Caco-2 (cell line): ENCODE measurements at regions of chr1 and their contacts with region 1.

Region 1: DNA sequence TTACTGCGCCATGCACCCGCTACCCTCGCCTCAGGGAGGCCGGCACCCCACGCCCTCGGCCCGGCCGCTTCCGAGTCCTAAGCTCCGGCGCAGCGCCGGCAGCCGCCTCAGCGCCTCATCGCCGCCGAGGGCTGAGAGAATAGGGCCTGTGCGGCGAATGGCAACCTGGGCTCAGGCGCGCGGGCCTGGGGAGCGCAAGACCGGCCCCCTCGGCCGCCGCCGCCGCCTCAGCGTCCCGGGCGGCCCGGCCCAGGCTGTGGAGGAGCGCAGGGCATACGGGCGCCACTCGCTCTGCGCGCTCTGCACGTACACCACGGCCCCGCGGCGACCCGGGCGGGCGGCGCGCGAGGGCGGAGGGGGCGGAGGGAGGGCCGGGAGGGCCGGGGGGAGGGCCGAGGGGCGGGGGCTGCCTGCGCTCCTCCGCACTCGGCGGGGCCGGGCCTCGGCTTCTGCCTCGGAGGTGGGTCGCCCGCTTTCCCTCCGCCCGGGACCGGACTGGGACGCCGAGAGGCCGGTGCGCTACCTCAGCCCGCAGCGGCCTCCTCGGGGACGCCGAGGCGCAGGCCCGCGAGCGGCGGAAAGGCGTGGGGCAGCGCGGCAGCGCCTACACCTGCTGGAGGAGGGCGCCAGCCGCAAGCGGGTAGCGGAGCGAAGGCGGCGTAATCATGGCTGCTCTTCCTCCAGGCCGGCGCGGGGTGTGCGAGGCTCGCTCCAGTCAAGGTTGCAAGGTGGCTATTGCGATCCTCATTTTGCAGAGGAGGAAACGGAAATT is at the start of gene EGLN1:
- DNase-seq: peak; percentile 89 to 94
- H3K4me3 ChIP-seq: peak within 1 kb of the TSS; percentile 51
- H3K4me3 Mint-ChIP-seq: peak within 1 kb of the TSS; percentile 78
- H3K27ac Mint-ChIP-seq: peak within 1 kb of the TSS; percentile 93
- H3K4me1 ChIP-seq: peaks cover 26% of the 10 kb centered on the region
- H3K4me1 Mint-ChIP-seq: peaks cover 19% of the 10 kb centered on the region
- H3K27me3 ChIP-seq: no peaks in the 10 kb centered on the region
- H3K27me3 Mint-ChIP-seq: no peaks in the 10 kb centered on the region
- CTCF ChIP-seq: peak; percentile 28 to 55
- total RNA-seq, gene EGLN1: 26.7 and 31.1 TPM in 2 replicates

Region 2: DNA sequence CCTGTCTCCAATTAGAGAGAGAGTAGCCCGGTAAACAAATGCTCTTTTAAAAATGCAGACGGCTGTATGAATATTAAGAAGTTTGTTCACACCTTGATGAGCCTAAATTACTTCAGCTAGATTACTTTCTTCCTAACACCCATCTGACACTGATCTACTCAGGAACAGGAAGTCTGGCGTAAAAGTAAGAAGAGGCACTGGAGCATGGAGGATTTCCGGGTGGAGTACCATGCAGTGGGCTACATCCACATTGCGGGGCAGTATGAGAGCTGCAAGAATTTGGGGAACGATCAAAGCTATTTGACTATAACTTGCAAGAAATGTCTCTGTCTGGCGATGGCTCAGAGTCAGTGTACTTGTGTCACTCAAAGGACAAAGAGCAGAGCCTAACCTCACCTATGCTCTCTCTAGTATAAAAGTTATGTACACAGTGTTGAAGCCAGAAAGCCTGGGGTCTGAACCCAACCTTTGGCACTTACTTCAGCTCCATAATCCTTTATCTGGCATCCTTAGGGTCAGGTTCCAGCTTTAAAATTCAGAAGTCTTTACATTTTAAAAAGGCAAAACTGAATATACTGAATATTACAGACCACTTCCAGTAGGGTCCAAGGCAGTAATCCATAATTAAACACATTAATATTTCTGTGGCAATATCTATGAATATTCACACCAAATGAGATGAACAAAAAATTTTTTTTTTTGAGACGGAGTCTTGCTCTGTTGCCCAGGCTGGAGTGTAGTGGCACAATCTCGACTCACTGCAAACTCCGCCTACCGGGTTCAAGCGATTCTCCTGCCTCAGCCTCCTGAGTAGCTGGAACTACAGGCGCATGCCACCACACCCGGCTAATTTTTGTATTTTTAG is 189.1 kb before region 1 on chr1:
- CTCF ChIA-PET with region 1: no interaction called
- POLR2A ChIA-PET with region 1: no interaction called
- intact Hi-C with region 1: loop called (anchors 5 kb)
- DNase-seq: peak in 1 of 2 experiments; percentile 56
- H3K4me3 ChIP-seq: no peak overlapping the region
- H3K4me3 Mint-ChIP-seq: peak overlapping the region; percentile 71
- H3K27ac Mint-ChIP-seq: peak overlapping the region; percentile 96
- H3K4me1 ChIP-seq: peaks cover 49% of the 10 kb centered on the region
- H3K4me1 Mint-ChIP-seq: peaks cover 40% of the 10 kb centered on the region
- H3K27me3 ChIP-seq: no peaks in the 10 kb centered on the region
- H3K27me3 Mint-ChIP-seq: no peaks in the 10 kb centered on the region
- CTCF ChIP-seq: no peak

Region 3: GRCh38 chr1:231357831-231358354 is 64.3 kb before region 1 on chr1:
- CTCF ChIA-PET with region 1: interaction called, 6 read pairs
- POLR2A ChIA-PET with region 1: interaction called, 6 read pairs
- intact Hi-C with region 1: loop called (anchors 5 kb)
- DNase-seq: peak in 1 of 2 experiments; percentile 57
- H3K4me3 ChIP-seq: no peak overlapping the region
- H3K4me3 Mint-ChIP-seq: no peak overlapping the region
- H3K27ac Mint-ChIP-seq: no peak overlapping the region
- H3K4me1 ChIP-seq: no peaks in the 10 kb centered on the region
- H3K4me1 Mint-ChIP-seq: no peaks in the 10 kb centered on the region
- H3K27me3 ChIP-seq: no peaks in the 10 kb centered on the region
- H3K27me3 Mint-ChIP-seq: no peaks in the 10 kb centered on the region
- CTCF ChIP-seq: peak; percentile 64 to 76

Region 4: DNA sequence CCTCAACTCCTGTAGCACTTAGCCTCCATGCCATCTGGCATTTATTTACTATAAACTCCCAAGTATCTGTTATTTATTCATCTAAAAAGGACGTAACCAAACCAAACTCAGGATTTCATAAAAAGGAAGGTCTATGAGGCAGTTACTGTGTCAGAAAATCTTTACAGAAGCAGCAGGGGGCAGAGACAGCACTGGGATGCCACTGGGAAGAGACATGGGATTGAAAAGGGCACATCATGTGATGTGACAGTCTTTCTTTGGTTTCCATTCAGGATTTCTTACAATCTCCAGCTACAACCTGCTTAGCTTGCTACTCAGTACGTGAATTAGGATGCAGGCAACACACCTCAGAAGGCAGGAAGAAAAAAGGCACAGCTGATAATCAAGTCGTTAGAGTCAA is 52.9 kb before region 1 on chr1:
- CTCF ChIA-PET with region 1: no interaction called
- POLR2A ChIA-PET with region 1: no interaction called
- intact Hi-C with region 1: loop called (anchors 1 kb)
- DNase-seq: peak in 1 of 2 experiments; percentile 23
- H3K4me3 ChIP-seq: no peak overlapping the region
- H3K4me3 Mint-ChIP-seq: no peak overlapping the region
- H3K27ac Mint-ChIP-seq: no peak overlapping the region
- H3K4me1 ChIP-seq: no peaks in the 10 kb centered on the region
- H3K4me1 Mint-ChIP-seq: no peaks in the 10 kb centered on the region
- H3K27me3 ChIP-seq: no peaks in the 10 kb centered on the region
- H3K27me3 Mint-ChIP-seq: no peaks in the 10 kb centered on the region
- CTCF ChIP-seq: peak; percentile 17 to 26

Region 5: DNA sequence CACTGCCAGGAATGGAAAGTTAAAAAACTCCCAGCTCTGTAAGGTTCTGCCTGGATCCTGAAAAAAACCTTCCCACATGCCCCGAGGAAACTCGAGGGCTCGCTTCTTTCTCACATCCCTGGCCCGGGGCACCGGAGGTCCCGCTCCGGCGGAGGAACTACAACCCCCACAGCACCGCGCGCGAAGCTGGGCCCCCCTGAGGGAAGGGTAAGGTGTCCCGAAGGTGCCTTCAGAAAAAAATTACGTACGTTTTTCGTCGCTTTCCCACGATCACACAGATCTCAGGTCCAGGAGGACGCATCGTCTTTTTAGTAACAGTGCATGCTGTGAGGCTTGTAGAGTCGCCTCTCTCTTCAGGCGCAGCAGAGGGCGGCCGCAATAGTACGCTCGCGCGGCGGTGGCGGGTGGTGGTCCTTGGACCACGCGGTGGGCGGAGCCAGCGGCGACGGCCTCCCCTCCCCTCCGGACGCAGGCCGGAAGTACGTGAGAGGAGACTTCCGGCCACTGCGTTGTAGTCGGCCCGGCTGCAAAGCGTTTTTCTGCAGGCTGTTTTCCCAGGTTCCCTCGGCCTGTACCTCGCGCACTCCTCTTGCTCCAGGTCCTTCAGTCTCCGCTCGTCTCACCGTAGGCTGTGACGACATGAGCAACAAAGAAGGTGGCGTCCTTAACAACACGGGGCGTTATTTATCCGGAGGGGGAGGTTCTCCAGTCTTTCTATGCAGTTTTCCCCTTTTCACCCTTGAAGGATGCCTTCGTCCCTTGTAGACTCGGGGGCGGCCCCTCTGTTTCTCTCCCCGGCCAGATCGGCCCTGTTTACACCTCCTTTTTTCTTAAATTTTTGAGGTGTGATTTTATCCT is 106.2 kb after region 1 on chr1 and contains the start of gene TSNAX:
- CTCF ChIA-PET with region 1: no interaction called
- POLR2A ChIA-PET with region 1: no interaction called
- intact Hi-C with region 1: loop called (anchors 1 kb)
- DNase-seq: peak; percentile 93 to 95
- H3K4me3 ChIP-seq: peak within 1 kb of the TSS; percentile 88
- H3K4me3 Mint-ChIP-seq: peak within 1 kb of the TSS; percentile 94
- H3K27ac Mint-ChIP-seq: peak within 1 kb of the TSS; percentile 98
- H3K4me1 ChIP-seq: 0 out of 2 replicates have a peak, but pooled peaks cover 5% of the 10 kb centered on the region
- H3K4me1 Mint-ChIP-seq: peaks cover 7% of the 10 kb centered on the region
- H3K27me3 ChIP-seq: no peaks in the 10 kb centered on the region
- H3K27me3 Mint-ChIP-seq: no peaks in the 10 kb centered on the region
- CTCF ChIP-seq: no peak
- total RNA-seq, gene TSNAX: 37.0 and 39.0 TPM in 2 replicates

Region 6: DNA sequence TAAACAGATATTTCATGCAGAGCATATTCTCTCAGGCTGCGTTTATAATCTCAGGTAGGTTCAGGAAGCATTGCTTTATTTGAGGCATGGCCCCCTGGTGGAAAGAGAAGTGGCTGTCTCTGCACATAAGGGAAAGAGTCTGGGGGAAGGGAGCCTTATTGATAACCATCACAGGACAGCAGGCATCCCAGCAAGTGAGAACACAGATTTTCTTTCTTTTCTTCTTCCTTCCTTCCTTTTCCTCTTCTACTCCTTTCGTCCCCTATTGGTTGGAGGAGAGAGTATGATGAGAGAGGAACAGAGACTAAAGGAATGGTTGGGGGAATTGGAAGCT is 128.2 kb after region 1 on chr1:
- CTCF ChIA-PET with region 1: no interaction called
- POLR2A ChIA-PET with region 1: no interaction called
- intact Hi-C with region 1: loop called (anchors 1 kb)
- DNase-seq: peak; percentile 53 to 62
- H3K4me3 ChIP-seq: no peak overlapping the region
- H3K4me3 Mint-ChIP-seq: no peak overlapping the region
- H3K27ac Mint-ChIP-seq: no peak overlapping the region
- H3K4me1 ChIP-seq: no peaks in the 10 kb centered on the region
- H3K4me1 Mint-ChIP-seq: peaks cover 5% of the 10 kb centered on the region
- H3K27me3 ChIP-seq: no peaks in the 10 kb centered on the region
- H3K27me3 Mint-ChIP-seq: no peaks in the 10 kb centered on the region
- CTCF ChIP-seq: peak; percentile 73 to 84

Region 7: DNA sequence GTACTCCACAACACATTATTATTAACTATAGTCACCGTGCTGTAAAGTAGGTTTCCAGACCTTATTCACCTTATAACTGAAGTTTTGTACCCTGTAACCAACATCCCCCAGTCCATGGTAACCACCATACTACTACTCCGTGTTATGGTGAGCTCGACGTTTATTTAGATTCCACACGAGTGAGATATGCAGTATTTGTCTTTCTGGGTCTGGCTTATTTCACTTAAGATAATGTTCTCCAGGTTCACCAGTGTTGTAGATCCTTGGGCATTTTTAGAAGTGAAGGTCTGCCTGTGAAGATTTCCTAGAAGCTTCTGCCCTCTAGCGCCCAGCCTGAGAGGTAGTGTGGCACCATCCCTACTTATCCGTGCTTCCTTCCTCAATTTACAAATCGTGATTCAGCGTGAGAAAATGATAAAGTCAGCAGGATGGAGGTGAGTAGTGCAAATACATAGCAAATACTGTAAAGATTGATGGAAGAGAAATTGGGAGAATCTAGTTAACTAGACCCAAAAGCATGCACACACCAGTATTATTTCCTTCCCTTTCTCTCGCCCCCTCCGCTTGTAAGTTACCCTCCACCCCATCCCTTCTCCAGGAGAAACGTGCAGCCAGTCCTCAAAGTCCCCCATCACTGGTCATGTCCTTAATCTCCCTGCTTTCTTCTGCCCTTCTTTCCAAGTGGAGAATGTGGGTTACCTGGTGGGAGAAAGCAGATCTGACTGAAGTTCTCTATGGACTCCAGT is 168.4 kb after region 1 on chr1:
- CTCF ChIA-PET with region 1: no interaction called
- POLR2A ChIA-PET with region 1: no interaction called
- intact Hi-C with region 1: loop called (anchors 1 kb)
- DNase-seq: peak; percentile 54 to 66
- H3K4me3 ChIP-seq: no peak overlapping the region
- H3K4me3 Mint-ChIP-seq: peak overlapping the region; percentile 32
- H3K27ac Mint-ChIP-seq: no peak overlapping the region
- H3K4me1 ChIP-seq: no peaks in the 10 kb centered on the region
- H3K4me1 Mint-ChIP-seq: peaks cover 3% of the 10 kb centered on the region
- H3K27me3 ChIP-seq: no peaks in the 10 kb centered on the region
- H3K27me3 Mint-ChIP-seq: no peaks in the 10 kb centered on the region
- CTCF ChIP-seq: peak; percentile 70 to 80